IMR-90 (cell line): ENCODE measurements at regions of chr9 and their contacts with region 1.

Region 1: DNA sequence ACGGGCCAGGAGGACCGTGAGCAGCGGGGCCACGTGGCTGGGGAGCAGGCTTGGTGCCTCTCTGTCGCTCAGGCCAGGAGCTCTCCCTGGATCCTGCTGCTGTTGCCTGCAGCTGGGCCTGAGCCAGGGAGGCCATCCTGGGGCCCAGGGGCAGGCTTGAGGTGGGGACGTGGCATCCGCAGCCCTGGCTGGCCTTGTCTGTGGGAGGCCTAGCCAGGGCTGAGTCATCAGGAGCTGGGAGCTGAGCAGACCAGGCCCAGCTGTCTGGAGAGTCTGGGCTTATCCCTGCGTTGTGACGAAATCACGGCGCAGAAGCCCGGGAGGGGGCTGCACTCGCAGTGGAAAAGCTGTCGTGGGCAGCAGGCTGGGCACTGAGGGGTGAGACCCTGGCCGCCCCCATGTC is 138.8 kb upstream of the COL5A1 start:
- DNase-seq: peak; percentile 99
- ATAC-seq: peak; percentile 99
- H3K4me3 ChIP-seq: no peak overlapping the region
- H3K27ac ChIP-seq: peak overlapping the region; percentile 92
- H3K4me1 ChIP-seq: peaks cover 16% of the 10 kb centered on the region
- H3K27me3 ChIP-seq: no peaks in the 10 kb centered on the region
- CTCF ChIP-seq: no peak
- POLR2A ChIP-seq: peak; percentile 58
- RAD21 ChIP-seq: peak; percentile 50

Region 2: GRCh38 chr9:134536101-134536900 is 33.5 kb after region 1 on chr9:
- CTCF ChIA-PET with region 1: no interaction called
- POLR2A ChIA-PET with region 1: no interaction called
- dilution Hi-C with region 1: no loop called
- in situ Hi-C with region 1: no loop called
- intact Hi-C with region 1: loop called (anchors 1 kb)
- DNase-seq: peak; percentile 87
- ATAC-seq: peak; percentile 79
- H3K4me3 ChIP-seq: no peak overlapping the region
- H3K27ac ChIP-seq: peak overlapping the region; percentile 3; the same call in 1 of the 2 replicates
- H3K4me1 ChIP-seq: peaks cover 23% of the 10 kb centered on the region
- H3K27me3 ChIP-seq: no peaks in the 10 kb centered on the region
- CTCF ChIP-seq: no peak
- POLR2A ChIP-seq: no peak
- RAD21 ChIP-seq: peak; percentile 15; the same call in 1 of the 2 replicates